ENCODE measurements at regions of chr15 and their contacts with region 1.

Region 1: DNA sequence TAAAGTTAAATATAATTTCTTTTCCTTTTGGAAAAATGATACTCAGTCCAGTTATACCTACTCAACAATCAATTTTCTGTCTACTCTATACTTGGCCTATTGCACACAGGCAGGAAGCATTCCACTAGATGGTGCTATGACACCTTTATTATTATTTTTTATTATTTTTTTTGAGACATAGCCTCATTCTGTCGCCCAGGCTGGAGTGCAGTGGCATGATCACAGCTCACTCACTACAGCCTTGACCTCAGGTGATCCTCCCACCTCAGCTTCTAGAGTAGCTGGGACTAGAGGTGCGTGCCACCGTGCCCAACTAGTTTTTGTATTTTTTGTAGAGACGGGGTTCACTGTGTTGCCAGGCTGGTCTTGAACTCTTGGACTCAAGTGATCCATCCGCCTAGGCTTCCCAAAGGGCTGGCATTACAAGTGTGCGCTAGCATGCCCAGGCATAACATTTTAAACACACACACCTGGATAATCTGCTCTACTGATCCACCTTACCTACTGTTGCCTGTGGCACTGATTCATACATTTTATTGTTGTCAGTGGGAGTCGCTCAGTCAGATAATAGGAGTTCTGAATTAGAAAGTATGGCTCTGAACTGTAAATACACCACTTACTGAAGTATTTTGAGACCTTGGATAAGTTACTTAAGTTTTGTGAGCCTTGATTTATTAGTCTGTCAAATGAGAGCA is 56.2 kb downstream of the EIF3J start:
- DNase-seq: no peak
- H3K4me3 ChIP-seq: no peak overlapping the region
- H3K27ac ChIP-seq: no peak overlapping the region
- H3K4me1 ChIP-seq: no peaks in the 10 kb centered on the region
- H3K27me3 ChIP-seq: no peaks in the 10 kb centered on the region
- CTCF ChIP-seq: peak; percentile 28

Region 2: DNA sequence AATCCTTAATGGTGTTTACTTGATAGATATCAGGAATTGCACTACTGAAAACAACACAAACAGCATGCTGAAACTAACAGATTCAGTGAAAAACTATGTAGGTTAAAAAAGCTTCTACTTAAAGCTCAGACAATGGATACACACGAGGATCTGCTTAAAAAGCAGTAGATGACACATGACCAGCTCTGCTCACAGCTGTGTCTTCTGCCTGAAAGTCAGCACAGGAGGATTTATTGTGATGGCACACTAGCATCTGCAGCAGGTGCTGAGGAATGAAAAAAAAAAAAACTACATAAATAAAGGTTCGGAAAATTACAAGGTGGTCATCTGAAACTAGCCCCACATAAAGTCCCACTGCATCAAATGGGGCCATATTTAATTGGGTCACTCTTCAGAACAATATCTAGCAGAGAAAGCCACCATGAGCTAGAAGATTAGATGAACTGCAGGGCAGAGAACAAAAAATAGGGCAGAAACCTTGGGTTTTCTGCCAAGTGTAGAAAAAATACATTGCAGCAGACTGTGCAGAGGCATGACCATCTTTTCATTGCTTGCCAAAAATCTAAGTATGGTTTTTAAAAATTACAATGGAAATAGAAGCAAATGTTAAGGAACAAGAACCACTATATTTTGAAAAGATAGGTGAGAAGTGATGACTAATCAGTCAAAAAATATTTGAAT is 317.9 kb before region 1 on chr15:
- intact Hi-C with region 1: no loop called
- DNase-seq: no peak
- H3K4me3 ChIP-seq: no peak overlapping the region
- H3K27ac ChIP-seq: no peak overlapping the region
- H3K4me1 ChIP-seq: no peaks in the 10 kb centered on the region
- H3K27me3 ChIP-seq: no peaks in the 10 kb centered on the region
- CTCF ChIP-seq: no peak

Region 3: DNA sequence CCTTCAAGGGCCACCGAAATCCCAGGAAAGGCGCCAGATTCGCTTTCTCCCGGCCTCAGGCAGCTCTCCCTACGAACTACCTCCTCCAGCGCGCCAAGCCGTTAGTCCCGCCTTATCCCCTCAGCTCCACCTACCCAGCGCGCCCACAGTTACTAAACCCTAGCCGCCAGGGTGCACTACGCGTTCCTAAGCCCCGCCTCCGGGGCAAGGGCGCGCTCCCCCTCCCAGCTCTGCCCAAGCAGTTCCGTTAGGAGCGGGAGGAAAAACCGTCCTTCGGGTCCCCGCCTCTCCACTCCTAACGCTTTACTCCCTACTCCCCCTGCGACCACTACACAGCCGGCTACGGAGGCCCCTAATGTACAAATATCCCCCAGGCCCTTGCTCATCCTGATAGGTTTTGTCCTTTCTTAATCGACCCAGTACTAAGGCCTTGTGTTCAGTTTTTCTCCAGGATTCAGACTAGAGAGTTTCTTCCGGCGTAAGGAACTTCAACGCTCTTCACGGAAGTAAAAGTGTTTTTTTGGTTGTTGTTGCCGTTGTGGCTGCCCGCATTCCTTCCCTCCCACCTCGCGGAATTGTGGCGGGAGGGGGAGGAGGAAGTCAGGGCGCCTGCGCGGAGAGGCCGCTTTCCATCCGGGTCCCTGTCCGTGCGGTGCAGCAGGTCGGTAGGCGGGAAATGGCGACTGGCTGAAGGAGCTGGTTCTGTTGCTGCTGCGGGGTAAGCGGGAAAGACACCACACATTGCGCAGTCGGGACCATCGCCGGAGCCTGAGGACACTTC is 166.0 kb before region 1 on chr15 and contains the start of gene CTDSPL2:
- intact Hi-C with region 1: no loop called
- DNase-seq: peak; percentile 98
- H3K4me3 ChIP-seq: peak within 1 kb of the TSS; percentile 80
- H3K27ac ChIP-seq: peak within 1 kb of the TSS; percentile 98
- H3K4me1 ChIP-seq: peaks cover 14% of the 10 kb centered on the region
- H3K27me3 ChIP-seq: no peaks in the 10 kb centered on the region
- CTCF ChIP-seq: no peak
- total RNA-seq, gene CTDSPL2: 31.7 to 43.0 TPM

Region 4: GRCh38 chr15:44654858-44655257 is 61.7 kb after region 1 on chr15:
- intact Hi-C with region 1: loop called (anchors 10 kb)
- DNase-seq: no peak
- H3K4me3 ChIP-seq: no peak overlapping the region
- H3K27ac ChIP-seq: no peak overlapping the region
- H3K4me1 ChIP-seq: no peaks in the 10 kb centered on the region
- H3K27me3 ChIP-seq: no peaks in the 10 kb centered on the region
- CTCF ChIP-seq: no peak

Measured in colonic mucosa (tissue), 4 donors.